ENCODE measurements at regions of chr17 and their contacts with region 1.

Region 1: DNA sequence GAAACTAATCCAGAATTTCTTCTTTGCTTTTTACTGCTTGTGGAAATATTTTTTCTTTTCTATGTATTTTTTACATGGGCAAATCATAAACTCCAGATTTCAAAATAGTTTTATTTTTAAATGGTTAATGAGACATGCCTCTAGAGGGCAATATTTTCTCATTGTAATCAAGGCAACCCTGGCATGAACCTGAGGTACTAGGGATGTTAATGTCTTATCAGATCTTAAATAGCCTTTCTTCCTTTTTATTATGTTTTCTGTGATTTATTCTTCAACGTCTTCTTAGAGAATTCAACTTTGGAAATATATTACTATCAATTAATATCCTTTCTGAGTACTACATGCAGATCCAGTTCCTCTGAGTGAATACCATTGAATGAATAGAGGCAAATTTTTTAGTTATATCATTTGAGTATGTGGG is 324.7 kb downstream of the BCAS3 start:
- DNase-seq: peak; percentile 26
- ATAC-seq: no peak
- H3K4me3 Mint-ChIP-seq: no peak overlapping the region
- H3K27ac Mint-ChIP-seq: no peak overlapping the region
- H3K4me1 Mint-ChIP-seq: peaks cover 6% of the 10 kb centered on the region
- H3K27me3 Mint-ChIP-seq: peaks cover 2% of the 10 kb centered on the region

Region 2: DNA sequence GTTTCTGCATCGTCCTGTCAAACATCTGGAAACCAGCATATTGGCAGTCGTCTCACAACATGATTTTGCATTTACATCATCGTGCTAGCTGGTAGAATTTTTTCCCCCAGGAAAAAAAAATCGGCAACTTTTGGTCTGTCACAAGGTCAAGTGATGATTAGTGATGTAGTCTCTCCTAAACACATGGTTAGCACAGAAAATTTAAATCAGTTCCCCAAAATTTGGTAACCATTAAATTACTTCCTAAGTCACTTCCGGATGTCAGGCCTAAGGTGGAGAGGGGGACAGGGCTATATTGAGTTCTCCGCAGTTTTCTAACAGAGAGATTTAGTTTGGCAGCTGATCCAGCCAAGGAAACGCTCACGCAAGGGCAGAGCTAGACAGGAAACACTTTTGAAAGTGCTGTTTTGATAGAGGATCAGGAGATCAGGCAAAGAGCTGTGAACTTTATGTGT is 126.4 kb after region 1 on chr17:
- CTCF ChIA-PET with region 1: no interaction called
- POLR2A ChIA-PET with region 1: no interaction called
- DNase-seq: no peak
- ATAC-seq: no peak
- H3K4me3 Mint-ChIP-seq: no peak overlapping the region
- H3K27ac Mint-ChIP-seq: peak overlapping the region; percentile 13
- H3K4me1 Mint-ChIP-seq: peaks cover 6% of the 10 kb centered on the region
- H3K27me3 Mint-ChIP-seq: peaks cover 2% of the 10 kb centered on the region

Region 3: DNA sequence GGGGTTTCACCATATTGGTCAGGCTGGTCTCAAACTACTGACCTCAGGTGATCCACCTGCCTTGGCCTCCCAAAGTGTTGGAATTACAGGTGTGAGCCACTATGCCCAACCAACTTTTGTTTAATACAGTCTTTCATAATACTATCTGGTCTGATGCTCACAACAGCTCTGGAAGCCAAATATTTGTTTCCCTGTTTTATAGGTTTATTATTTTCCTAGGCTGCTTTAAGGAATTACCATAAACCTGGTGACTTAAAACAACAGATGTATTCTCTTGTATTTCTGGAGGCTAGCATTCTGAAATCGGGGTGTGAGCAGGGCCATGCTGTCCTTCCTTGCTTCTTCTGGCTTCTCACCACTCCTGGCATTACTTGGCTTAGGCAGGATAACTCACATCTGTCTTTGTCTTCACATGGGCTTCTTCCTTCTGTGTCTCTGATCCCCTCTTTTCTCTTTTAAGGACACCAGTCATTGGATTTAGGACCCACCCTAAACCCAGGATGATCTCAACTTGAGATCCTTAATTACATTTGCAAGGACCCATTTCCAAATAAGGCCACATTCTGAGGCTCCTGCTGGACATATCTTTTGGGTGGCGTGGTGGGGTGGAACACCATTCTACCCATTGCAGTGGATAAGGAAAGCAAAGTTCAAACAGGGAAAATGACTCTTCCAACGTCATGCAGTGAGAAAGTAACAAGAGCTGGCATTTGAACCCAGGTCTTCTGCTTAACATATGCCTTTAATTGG is 358.0 kb after region 1 on chr17:
- CTCF ChIA-PET with region 1: interaction called, 18 read pairs
- POLR2A ChIA-PET with region 1: no interaction called
- DNase-seq: no peak
- ATAC-seq: no peak
- H3K4me3 Mint-ChIP-seq: no peak overlapping the region
- H3K27ac Mint-ChIP-seq: no peak overlapping the region
- H3K4me1 Mint-ChIP-seq: no peaks in the 10 kb centered on the region
- H3K27me3 Mint-ChIP-seq: peaks cover 2% of the 10 kb centered on the region